Activated CD8-positive, alpha-beta T cell treated with anti-CD3 and anti-CD28 coated beads for 36 hours (primary cell): ENCODE measurements at regions of chr12 and their contacts with region 1.

Region 1: DNA sequence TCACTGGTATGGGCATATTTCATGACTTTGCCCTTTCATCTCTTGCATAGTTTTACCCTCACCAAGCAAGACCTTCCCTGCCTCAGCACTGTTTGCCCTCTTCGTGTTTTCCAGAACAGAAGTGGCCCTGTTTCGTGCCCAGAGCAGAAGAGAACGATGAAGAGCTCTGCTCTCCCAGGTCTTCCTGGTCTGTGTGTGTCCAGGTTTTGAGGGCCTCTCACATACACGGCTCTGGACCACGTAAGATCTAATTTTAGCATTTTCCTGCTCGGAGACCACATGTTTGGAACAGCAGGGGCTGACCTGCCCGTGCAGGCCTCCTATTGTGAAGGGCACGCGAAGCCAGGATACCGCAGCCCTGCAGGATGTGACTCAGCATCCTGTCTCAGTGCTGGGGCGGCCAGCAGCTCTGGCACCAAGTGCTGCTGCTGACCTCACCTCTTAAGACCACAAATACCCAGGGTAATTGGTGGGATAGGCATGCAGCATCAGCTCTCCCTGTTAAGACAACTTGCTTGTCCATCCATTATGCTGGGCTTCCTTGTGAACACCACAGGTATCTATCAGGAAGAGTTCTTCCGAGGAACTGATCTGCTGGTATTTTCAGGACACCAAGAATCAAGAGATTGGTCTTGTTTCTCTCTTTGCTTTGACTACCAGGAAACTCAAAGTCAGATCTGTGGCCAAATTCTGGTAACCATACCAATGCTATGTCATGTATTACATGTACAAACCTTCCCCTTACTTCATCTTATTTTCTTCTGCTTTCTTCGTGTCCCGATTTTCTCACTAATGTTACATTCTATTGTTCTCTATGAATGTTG is 19.0 kb downstream of the SSH1 start:
- DNase-seq: peak; percentile 90
- ATAC-seq: peak; percentile 94
- H3K4me3 Mint-ChIP-seq: peak overlapping the region; percentile 65
- H3K27ac Mint-ChIP-seq: peak overlapping the region; percentile 91
- H3K4me1 Mint-ChIP-seq: peaks cover 52% of the 10 kb centered on the region
- H3K27me3 Mint-ChIP-seq: no peaks in the 10 kb centered on the region
- CTCF ChIP-seq: no peak

Region 2: GRCh38 chr12:108459149-108459548 is 379.3 kb before region 1 on chr12:
- CTCF ChIA-PET with region 1: no interaction called
- POLR2A ChIA-PET with region 1: no interaction called
- intact Hi-C with region 1: no loop called
- DNase-seq: no peak
- ATAC-seq: no peak
- H3K4me3 Mint-ChIP-seq: no peak overlapping the region
- H3K27ac Mint-ChIP-seq: no peak overlapping the region
- H3K4me1 Mint-ChIP-seq: no peaks in the 10 kb centered on the region
- H3K27me3 Mint-ChIP-seq: peaks cover 8% of the 10 kb centered on the region
- CTCF ChIP-seq: no peak

Region 3: DNA sequence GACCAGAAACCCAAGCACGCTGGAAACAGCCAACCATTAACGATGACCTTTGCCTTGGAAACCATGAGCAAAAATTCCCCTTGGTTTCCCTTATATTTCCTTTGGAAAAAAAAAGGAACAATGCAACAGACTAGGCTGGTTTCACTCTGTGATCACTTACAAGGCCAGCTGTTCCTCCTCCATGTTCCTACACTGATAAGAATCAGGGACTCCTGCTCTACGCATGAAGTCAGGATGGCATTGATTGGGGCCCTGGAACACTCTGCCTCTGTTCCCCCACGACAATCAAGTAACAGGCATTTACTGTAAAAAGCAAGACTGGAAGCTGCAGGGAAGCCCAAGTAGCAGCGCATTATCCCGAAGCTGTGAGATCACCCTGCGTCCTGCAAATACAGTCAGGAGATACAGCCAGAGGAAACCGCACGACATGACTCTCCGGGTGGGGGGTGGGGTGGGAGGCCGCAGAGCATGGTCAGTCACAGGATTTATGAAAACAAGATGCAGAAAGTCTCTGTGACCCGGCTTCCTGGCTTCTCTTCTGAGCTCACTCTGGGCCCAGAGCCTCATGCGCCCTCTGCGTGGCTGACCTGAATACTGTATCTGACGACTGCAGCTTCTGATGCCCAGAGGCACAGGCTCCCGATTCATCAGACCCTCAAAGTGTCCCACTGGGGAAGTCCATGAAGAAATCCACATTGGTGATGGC is 12.2 kb before region 1 on chr12:
- CTCF ChIA-PET with region 1: interaction called, 3 read pairs
- POLR2A ChIA-PET with region 1: interaction called, 14 read pairs
- intact Hi-C with region 1: no loop called
- DNase-seq: peak; percentile 20
- ATAC-seq: peak; percentile 15
- H3K4me3 Mint-ChIP-seq: no peak overlapping the region
- H3K27ac Mint-ChIP-seq: peak overlapping the region; percentile 40
- H3K4me1 Mint-ChIP-seq: peaks cover 42% of the 10 kb centered on the region
- H3K27me3 Mint-ChIP-seq: no peaks in the 10 kb centered on the region
- CTCF ChIP-seq: no peak

Region 4: DNA sequence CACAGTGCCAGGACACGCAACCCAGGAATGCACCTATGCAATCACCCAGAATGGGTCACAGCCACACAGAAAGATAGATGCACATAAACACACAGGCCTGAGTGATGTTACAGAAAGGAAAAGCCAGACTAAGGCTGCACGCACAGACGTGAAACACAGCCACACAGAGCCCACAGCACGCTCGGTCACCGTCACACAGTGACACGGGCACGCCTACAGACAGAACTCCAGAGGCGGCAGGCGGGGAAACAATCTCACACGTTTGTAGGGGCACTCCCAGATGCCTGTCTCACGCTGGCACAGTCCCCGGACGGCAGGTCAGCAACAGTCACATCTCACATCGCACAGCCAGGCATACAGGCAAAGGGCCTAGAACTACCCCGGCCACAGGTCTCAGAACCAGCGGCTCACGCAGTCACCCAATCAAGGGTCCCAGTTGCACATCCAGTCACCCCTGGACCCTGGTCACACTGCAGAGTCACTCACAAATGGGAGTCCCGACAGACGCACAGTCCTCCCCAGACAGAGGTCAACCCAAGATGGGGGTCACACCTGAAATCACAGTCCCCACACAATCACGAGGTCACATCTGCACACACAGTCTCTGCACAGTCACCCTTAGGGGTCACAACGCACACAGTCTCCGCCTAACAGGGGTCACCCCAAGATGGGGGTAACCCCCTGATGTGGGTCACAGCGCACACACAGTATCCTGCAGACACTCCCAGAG is 18.2 kb after region 1 on chr12:
- CTCF ChIA-PET with region 1: interaction called, 4 read pairs
- POLR2A ChIA-PET with region 1: interaction called, 19 read pairs
- intact Hi-C with region 1: no loop called
- DNase-seq: peak; percentile 79
- ATAC-seq: peak; percentile 48
- H3K4me3 Mint-ChIP-seq: peak overlapping the region; percentile 89
- H3K27ac Mint-ChIP-seq: peak overlapping the region; percentile 95
- H3K4me1 Mint-ChIP-seq: peaks cover 41% of the 10 kb centered on the region
- H3K27me3 Mint-ChIP-seq: peaks cover 2% of the 10 kb centered on the region
- CTCF ChIP-seq: no peak